ENCODE measurements at regions of chrX and their contacts with region 1.

Region 1: GRCh38 chrX:41116948-41117347 is 31.7 kb downstream of the USP9X start:
- DNase-seq: no peak
- H3K4me3 Mint-ChIP-seq: peak overlapping the region; percentile 47
- H3K27ac Mint-ChIP-seq: peak overlapping the region; percentile 89
- H3K4me1 Mint-ChIP-seq: peaks cover 66% of the 10 kb centered on the region
- H3K27me3 Mint-ChIP-seq: no peaks in the 10 kb centered on the region

Region 2: GRCh38 chrX:40700640-40701342 is 416.2 kb before region 1 on chrX:
- CTCF ChIA-PET with region 1: no interaction called
- DNase-seq: no peak
- H3K4me3 Mint-ChIP-seq: no peak overlapping the region
- H3K27ac Mint-ChIP-seq: no peak overlapping the region
- H3K4me1 Mint-ChIP-seq: no peaks in the 10 kb centered on the region
- H3K27me3 Mint-ChIP-seq: no peaks in the 10 kb centered on the region

Region 3: GRCh38 chrX:40877887-40878286 is 239.1 kb before region 1 on chrX:
- CTCF ChIA-PET with region 1: interaction called, 51 read pairs
- DNase-seq: peak; percentile 22
- H3K4me3 Mint-ChIP-seq: no peak overlapping the region
- H3K27ac Mint-ChIP-seq: no peak overlapping the region
- H3K4me1 Mint-ChIP-seq: no peaks in the 10 kb centered on the region
- H3K27me3 Mint-ChIP-seq: no peaks in the 10 kb centered on the region

Region 4: GRCh38 chrX:41137589-41137988 is 20.6 kb after region 1 on chrX:
- CTCF ChIA-PET with region 1: no interaction called
- DNase-seq: no peak
- H3K4me3 Mint-ChIP-seq: no peak overlapping the region
- H3K27ac Mint-ChIP-seq: no peak overlapping the region
- H3K4me1 Mint-ChIP-seq: no peaks in the 10 kb centered on the region
- H3K27me3 Mint-ChIP-seq: no peaks in the 10 kb centered on the region

Region 5: DNA sequence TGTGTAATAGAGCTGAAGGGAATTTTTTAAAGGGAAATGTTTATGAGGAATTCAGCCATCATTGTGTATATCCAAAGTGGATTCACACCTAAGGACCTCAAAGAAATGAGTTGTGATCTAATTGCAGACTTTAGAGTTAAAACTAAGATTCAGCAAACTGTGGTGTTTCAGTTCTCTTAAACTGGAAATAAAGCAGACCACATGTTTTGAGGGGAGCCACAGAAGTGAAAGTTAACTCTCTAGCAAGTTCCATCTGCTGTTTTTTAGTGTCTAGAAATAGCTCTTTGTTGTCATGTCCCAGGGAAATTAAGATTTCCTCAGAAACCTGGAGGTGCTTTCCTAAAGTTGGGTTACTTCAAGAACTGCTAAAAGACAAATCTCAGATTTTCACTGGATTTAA is 119.7 kb after region 1 on chrX:
- CTCF ChIA-PET with region 1: no interaction called
- DNase-seq: no peak
- H3K4me3 Mint-ChIP-seq: no peak overlapping the region
- H3K27ac Mint-ChIP-seq: no peak overlapping the region
- H3K4me1 Mint-ChIP-seq: peaks cover 13% of the 10 kb centered on the region
- H3K27me3 Mint-ChIP-seq: no peaks in the 10 kb centered on the region

Measured in activated naive CD4-positive, alpha-beta T cell treated with anti-CD3 and anti-CD28 coated beads, Interleukin-2, amount 10 ng/mL, durations not matched to agents 7 days and 5 days (primary cell).